Heart left ventricle (tissue), 16 donors: ENCODE measurements at regions of chr9 and their contacts with region 1.

Region 1: GRCh38 chr9:3534614-3535404 is 9.0 kb upstream of the RFX3 start:
- DNase-seq: no peak
- ATAC-seq: no peak
- H3K4me3 ChIP-seq: no peak overlapping the region
- H3K27ac ChIP-seq: no peak overlapping the region
- H3K4me1 ChIP-seq: no peaks in the 10 kb centered on the region
- H3K27me3 ChIP-seq: no peaks in the 10 kb centered on the region
- CTCF ChIP-seq: no peak
- POLR2A ChIP-seq: no peak

Region 2: DNA sequence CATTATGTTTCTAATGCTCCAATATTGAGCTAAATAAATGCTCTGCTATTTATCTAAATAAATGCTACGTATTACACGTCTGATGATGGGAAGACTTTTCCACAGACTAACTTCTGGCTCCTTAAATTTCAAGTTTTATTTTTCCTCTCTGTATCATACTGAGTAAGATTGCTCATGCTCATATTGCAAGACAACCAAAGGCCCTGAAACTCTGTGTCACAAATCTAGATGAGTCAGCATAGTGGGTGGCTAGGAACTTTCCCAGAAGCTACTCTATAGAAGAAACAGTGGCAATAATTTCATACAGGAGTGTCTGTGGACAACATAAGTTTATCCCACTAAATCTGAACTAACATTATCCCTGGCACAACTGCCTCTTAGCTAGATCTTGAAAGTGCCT is 44.0 kb after region 1 on chr9:
- intact Hi-C with region 1: loop called in 1 of 10 experiments (anchors 5 kb)
- DNase-seq: no peak
- ATAC-seq: no peak
- H3K4me3 ChIP-seq: no peak overlapping the region
- H3K27ac ChIP-seq: no peak overlapping the region
- H3K4me1 ChIP-seq: peaks cover 0 to 5% (median 0%) of the 10 kb centered on the region in 12 donors
- H3K27me3 ChIP-seq: no peaks in the 10 kb centered on the region
- CTCF ChIP-seq: no peak
- POLR2A ChIP-seq: no peak

Region 3: GRCh38 chr9:4038182-4038723 is 503.4 kb after region 1 on chr9:
- intact Hi-C with region 1: no loop called
- DNase-seq: no peak
- ATAC-seq: peak in 3 of 4 donors; percentile 33 to 67 (median 55)
- H3K4me3 ChIP-seq: no peak overlapping the region
- H3K27ac ChIP-seq: peak overlapping the region in 5 of 12 donors; percentile 24 to 65 (median 37)
- H3K4me1 ChIP-seq: peaks cover 0 to 3% (median 0%) of the 10 kb centered on the region in 12 donors
- H3K27me3 ChIP-seq: no peaks in the 10 kb centered on the region
- CTCF ChIP-seq: no peak
- POLR2A ChIP-seq: no peak